ENCODE measurements at regions of chr13 and their contacts with region 1.

Region 1: GRCh38 chr13:26996965-26997752 is 174.5 kb downstream of the USP12 start:
- DNase-seq: no peak
- ATAC-seq: no peak
- H3K4me3 ChIP-seq: no peak overlapping the region
- H3K4me3 Mint-ChIP-seq: no peak overlapping the region
- H3K27ac ChIP-seq: no peak overlapping the region
- H3K27ac Mint-ChIP-seq: no peak overlapping the region
- H3K4me1 ChIP-seq: no peaks in the 10 kb centered on the region
- H3K4me1 Mint-ChIP-seq: no peaks in the 10 kb centered on the region
- H3K27me3 ChIP-seq: no peaks in the 10 kb centered on the region
- H3K27me3 Mint-ChIP-seq: peaks cover 38% of the 10 kb centered on the region
- CTCF ChIP-seq: no peak

Region 2: GRCh38 chr13:26839682-26840081 is 157.5 kb before region 1 on chr13:
- CTCF ChIA-PET with region 1: no interaction called
- POLR2A ChIA-PET with region 1: no interaction called
- intact Hi-C with region 1: no loop called
- DNase-seq: no peak
- ATAC-seq: no peak
- H3K4me3 ChIP-seq: no peak overlapping the region
- H3K4me3 Mint-ChIP-seq: no peak overlapping the region
- H3K27ac ChIP-seq: no peak overlapping the region
- H3K27ac Mint-ChIP-seq: no peak overlapping the region
- H3K4me1 ChIP-seq: no peaks in the 10 kb centered on the region
- H3K4me1 Mint-ChIP-seq: no peaks in the 10 kb centered on the region
- H3K27me3 ChIP-seq: peaks cover 0 to 4% of the 10 kb centered on the region in 2 experiments
- H3K27me3 Mint-ChIP-seq: peaks cover 29% of the 10 kb centered on the region
- CTCF ChIP-seq: no peak

Region 3: GRCh38 chr13:26855921-26856320 is 141.2 kb before region 1 on chr13:
- CTCF ChIA-PET with region 1: no interaction called
- POLR2A ChIA-PET with region 1: no interaction called
- intact Hi-C with region 1: no loop called
- DNase-seq: no peak
- ATAC-seq: no peak
- H3K4me3 ChIP-seq: no peak overlapping the region
- H3K4me3 Mint-ChIP-seq: no peak overlapping the region
- H3K27ac ChIP-seq: no peak overlapping the region
- H3K27ac Mint-ChIP-seq: no peak overlapping the region
- H3K4me1 ChIP-seq: no peaks in the 10 kb centered on the region
- H3K4me1 Mint-ChIP-seq: no peaks in the 10 kb centered on the region
- H3K27me3 ChIP-seq: no peaks in the 10 kb centered on the region
- H3K27me3 Mint-ChIP-seq: peaks cover 44% of the 10 kb centered on the region
- CTCF ChIP-seq: no peak

Region 4: DNA sequence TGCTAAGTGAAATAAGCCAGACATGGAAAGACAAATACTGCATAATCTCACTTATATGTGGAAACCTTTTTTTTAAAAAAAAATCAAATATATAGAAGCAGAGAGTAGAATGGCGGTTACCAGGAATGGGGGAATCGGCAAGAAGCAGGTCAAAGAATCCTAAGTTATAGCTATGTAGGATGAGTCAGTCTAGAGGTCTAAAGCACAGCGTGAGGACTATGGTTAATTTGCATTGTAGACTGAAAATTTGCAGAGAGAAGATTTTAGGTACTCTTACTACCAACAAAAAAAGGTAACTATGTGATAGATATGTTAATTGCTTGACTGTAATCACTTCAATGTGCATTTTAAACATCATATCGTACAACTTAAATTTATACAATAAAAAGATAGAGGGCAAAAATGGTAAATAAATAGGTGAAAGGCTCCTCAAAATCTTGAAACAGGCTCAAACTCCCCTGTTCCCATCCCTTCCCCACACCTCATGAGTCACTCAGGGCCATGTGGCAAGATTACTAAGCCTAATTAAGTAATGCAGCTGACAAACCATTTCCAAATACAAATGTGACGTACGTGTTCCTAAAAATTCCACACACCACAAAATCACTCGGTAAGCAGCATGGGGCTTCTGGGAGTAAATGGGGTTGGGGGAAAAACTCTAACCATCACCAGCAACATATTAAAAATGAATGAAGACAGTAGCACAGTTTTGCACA is 15.5 kb after region 1 on chr13:
- CTCF ChIA-PET with region 1: no interaction called
- POLR2A ChIA-PET with region 1: no interaction called
- intact Hi-C with region 1: no loop called
- DNase-seq: no peak
- ATAC-seq: no peak
- H3K4me3 ChIP-seq: no peak overlapping the region
- H3K4me3 Mint-ChIP-seq: no peak overlapping the region
- H3K27ac ChIP-seq: no peak overlapping the region
- H3K27ac Mint-ChIP-seq: no peak overlapping the region
- H3K4me1 ChIP-seq: no peaks in the 10 kb centered on the region
- H3K4me1 Mint-ChIP-seq: no peaks in the 10 kb centered on the region
- H3K27me3 ChIP-seq: no peaks in the 10 kb centered on the region
- H3K27me3 Mint-ChIP-seq: peaks cover 8% of the 10 kb centered on the region
- CTCF ChIP-seq: no peak

Region 5: GRCh38 chr13:27022571-27023311 is 25.6 kb after region 1 on chr13:
- CTCF ChIA-PET with region 1: no interaction called
- POLR2A ChIA-PET with region 1: no interaction called
- intact Hi-C with region 1: loop called in 1 of 2 experiments (anchors 1 kb)
- DNase-seq: no peak
- ATAC-seq: no peak
- H3K4me3 ChIP-seq: no peak overlapping the region
- H3K4me3 Mint-ChIP-seq: no peak overlapping the region
- H3K27ac ChIP-seq: no peak overlapping the region
- H3K27ac Mint-ChIP-seq: no peak overlapping the region
- H3K4me1 ChIP-seq: no peaks in the 10 kb centered on the region
- H3K4me1 Mint-ChIP-seq: no peaks in the 10 kb centered on the region
- H3K27me3 ChIP-seq: no peaks in the 10 kb centered on the region
- H3K27me3 Mint-ChIP-seq: peaks cover 7% of the 10 kb centered on the region
- CTCF ChIP-seq: no peak

Region 6: GRCh38 chr13:27079421-27079958 is 82.3 kb after region 1 on chr13:
- CTCF ChIA-PET with region 1: no interaction called
- POLR2A ChIA-PET with region 1: no interaction called
- intact Hi-C with region 1: loop called in 1 of 2 experiments (anchors 10 kb)
- DNase-seq: no peak
- ATAC-seq: no peak
- H3K4me3 ChIP-seq: no peak overlapping the region
- H3K4me3 Mint-ChIP-seq: no peak overlapping the region
- H3K27ac ChIP-seq: no peak overlapping the region
- H3K27ac Mint-ChIP-seq: no peak overlapping the region
- H3K4me1 ChIP-seq: no peaks in the 10 kb centered on the region
- H3K4me1 Mint-ChIP-seq: peaks cover 28% of the 10 kb centered on the region
- H3K27me3 ChIP-seq: no peaks in the 10 kb centered on the region
- H3K27me3 Mint-ChIP-seq: no peaks in the 10 kb centered on the region
- CTCF ChIP-seq: no peak

Region 7: GRCh38 chr13:27283906-27284493 is 286.8 kb after region 1 on chr13:
- CTCF ChIA-PET with region 1: no interaction called
- POLR2A ChIA-PET with region 1: no interaction called
- intact Hi-C with region 1: loop called in 1 of 2 experiments (anchors 5 kb)
- DNase-seq: peak in 2 of 9 experiments; percentile 23 to 36
- ATAC-seq: no peak
- H3K4me3 ChIP-seq: no peak overlapping the region
- H3K4me3 Mint-ChIP-seq: no peak overlapping the region
- H3K27ac ChIP-seq: no peak overlapping the region
- H3K27ac Mint-ChIP-seq: no peak overlapping the region
- H3K4me1 ChIP-seq: no peaks in the 10 kb centered on the region
- H3K4me1 Mint-ChIP-seq: peaks cover 6% of the 10 kb centered on the region
- H3K27me3 ChIP-seq: no peaks in the 10 kb centered on the region
- H3K27me3 Mint-ChIP-seq: no peaks in the 10 kb centered on the region
- CTCF ChIP-seq: no peak

Region 8: GRCh38 chr13:28623782-28624706 is 1626.9 kb after region 1 on chr13:
- CTCF ChIA-PET with region 1: no interaction called
- POLR2A ChIA-PET with region 1: no interaction called
- intact Hi-C with region 1: no loop called
- DNase-seq: no peak
- ATAC-seq: no peak
- H3K4me3 ChIP-seq: no peak overlapping the region
- H3K4me3 Mint-ChIP-seq: no peak overlapping the region
- H3K27ac ChIP-seq: no peak overlapping the region
- H3K27ac Mint-ChIP-seq: no peak overlapping the region
- H3K4me1 ChIP-seq: no peaks in the 10 kb centered on the region
- H3K4me1 Mint-ChIP-seq: peaks cover 6% of the 10 kb centered on the region
- H3K27me3 ChIP-seq: no peaks in the 10 kb centered on the region
- H3K27me3 Mint-ChIP-seq: no peaks in the 10 kb centered on the region
- CTCF ChIP-seq: no peak

Measured in CD8-positive, alpha-beta T cell (primary cell).